Naive thymus-derived CD4-positive, alpha-beta T cell (primary cell): ENCODE measurements at regions of chr7 and their contacts with region 1.

Region 1: DNA sequence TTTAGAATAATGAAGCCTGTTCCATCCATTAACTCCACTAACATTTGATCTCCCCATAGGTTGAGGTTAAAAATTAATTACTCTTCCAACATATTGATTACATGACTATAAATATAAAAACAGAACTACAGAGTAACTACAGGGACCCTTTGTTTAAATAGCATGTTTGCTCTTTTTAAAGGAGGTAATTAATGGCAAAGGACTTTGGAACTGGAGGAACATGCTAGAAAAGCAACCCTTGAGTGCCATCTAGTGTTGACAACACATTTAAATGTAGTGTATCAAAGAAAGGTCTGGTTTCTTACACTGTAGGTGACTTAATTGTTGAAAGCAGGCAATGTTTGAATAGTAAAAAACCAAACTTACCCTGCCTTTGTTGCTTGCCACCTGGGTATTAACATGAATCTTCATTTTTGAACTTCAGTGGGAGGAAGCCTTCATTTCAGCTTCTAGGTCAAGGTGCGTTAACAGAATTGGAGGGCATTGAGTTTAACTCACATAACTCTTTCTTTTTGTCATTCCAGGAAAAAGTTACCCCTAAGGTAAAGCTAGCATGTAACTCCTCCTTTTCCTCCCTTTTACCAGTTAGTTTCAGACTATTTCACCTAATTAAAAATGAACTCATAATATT is 52.6 kb upstream of the CAPZA2 start:
- DNase-seq: peak in 6 of 9 donors; percentile 14 to 34 (median 23)
- ATAC-seq: peak; percentile 69
- H3K4me3 ChIP-seq: no peak overlapping the region
- H3K4me3 Mint-ChIP-seq: no peak overlapping the region
- H3K27ac ChIP-seq: no peak overlapping the region
- H3K27ac Mint-ChIP-seq: no peak overlapping the region
- H3K4me1 ChIP-seq: no peaks in the 10 kb centered on the region
- H3K4me1 Mint-ChIP-seq: no peaks in the 10 kb centered on the region
- H3K27me3 ChIP-seq: no peaks in the 10 kb centered on the region
- H3K27me3 Mint-ChIP-seq: peaks cover 0 to 22% (median 4%) of the 10 kb centered on the region in 5 donors

Region 2: DNA sequence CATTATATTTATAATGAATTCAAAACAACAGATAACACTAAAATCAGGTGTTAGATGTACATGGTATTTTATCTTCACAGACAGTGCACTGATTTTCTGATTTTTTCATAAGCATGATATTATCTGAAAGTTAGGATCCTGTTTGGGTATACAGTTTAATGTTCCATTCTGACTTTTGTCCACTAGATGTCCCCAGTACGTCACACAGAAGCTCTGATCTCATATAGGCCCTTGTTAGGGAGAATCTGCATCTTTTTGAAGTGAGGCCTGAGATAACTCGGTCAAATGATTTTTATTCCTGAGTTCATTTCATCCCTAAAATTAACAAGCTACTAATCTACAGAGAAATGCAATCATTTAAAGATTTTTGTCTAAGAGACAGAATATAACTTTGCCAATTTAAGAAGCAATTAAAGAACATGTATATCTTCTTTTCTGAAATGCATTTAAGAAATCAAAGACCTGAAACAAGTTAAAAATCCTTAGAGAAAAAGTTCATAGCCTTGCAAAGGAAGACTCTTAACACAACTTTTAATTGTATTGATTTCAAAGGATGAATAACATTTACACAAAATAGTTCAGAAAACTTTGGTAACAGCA is 671.4 kb before region 1 on chr7:
- CTCF ChIA-PET with region 1: no interaction called
- POLR2A ChIA-PET with region 1: no interaction called
- intact Hi-C with region 1: loop called in 1 of 2 experiments (anchors 1 kb)
- DNase-seq: peak in 5 of 9 donors; percentile 22 to 42 (median 27)
- ATAC-seq: peak; percentile 89
- H3K4me3 ChIP-seq: no peak overlapping the region
- H3K4me3 Mint-ChIP-seq: no peak overlapping the region
- H3K27ac ChIP-seq: no peak overlapping the region
- H3K27ac Mint-ChIP-seq: no peak overlapping the region
- H3K4me1 ChIP-seq: no peaks in the 10 kb centered on the region
- H3K4me1 Mint-ChIP-seq: peaks cover 0 to 18% (median 8%) of the 10 kb centered on the region in 7 donors
- H3K27me3 ChIP-seq: peaks cover 0 to 2% of the 10 kb centered on the region in 2 donors
- H3K27me3 Mint-ChIP-seq: peaks cover 0 to 22% (median 10%) of the 10 kb centered on the region in 5 donors

Region 3: DNA sequence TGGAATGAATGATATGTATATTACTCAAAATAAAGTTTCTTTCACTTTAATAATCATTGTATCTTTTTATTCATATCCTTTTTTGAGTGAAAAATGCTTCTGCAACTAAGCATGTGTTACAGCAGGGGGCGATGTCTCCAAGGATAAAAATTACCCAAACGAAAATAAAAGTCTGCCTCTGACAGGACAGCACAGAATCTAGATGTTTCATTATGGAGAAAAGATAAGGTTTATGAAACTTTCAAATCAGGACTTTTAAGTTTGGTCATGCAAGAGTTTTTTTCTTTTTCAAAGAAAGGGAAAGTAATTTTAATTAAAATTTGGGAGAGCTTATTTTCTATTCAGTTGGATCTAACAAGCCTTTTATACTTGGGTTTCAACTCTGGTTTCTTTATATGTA is 551.0 kb before region 1 on chr7:
- CTCF ChIA-PET with region 1: no interaction called
- POLR2A ChIA-PET with region 1: no interaction called
- intact Hi-C with region 1: loop called (anchors 1 to 2 kb)
- DNase-seq: peak in 7 of 9 donors; percentile 14 to 45 (median 36)
- ATAC-seq: peak; percentile 82
- H3K4me3 ChIP-seq: no peak overlapping the region
- H3K4me3 Mint-ChIP-seq: no peak overlapping the region
- H3K27ac ChIP-seq: no peak overlapping the region
- H3K27ac Mint-ChIP-seq: peak overlapping the region in 7 of 9 donors; percentile 33 to 79 (median 49)
- H3K4me1 ChIP-seq: no peaks in the 10 kb centered on the region
- H3K4me1 Mint-ChIP-seq: peaks cover 10 to 26% (median 15%) of the 10 kb centered on the region in 7 donors
- H3K27me3 ChIP-seq: no peaks in the 10 kb centered on the region
- H3K27me3 Mint-ChIP-seq: peaks cover 0 to 5% (median 0%) of the 10 kb centered on the region in 5 donors

Region 4: GRCh38 chr7:116679500-116679899 is 130.3 kb before region 1 on chr7:
- CTCF ChIA-PET with region 1: no interaction called
- POLR2A ChIA-PET with region 1: no interaction called
- intact Hi-C with region 1: loop called in 1 of 2 experiments (anchors 2 kb)
- DNase-seq: no peak
- ATAC-seq: no peak
- H3K4me3 ChIP-seq: no peak overlapping the region
- H3K4me3 Mint-ChIP-seq: no peak overlapping the region
- H3K27ac ChIP-seq: no peak overlapping the region
- H3K27ac Mint-ChIP-seq: no peak overlapping the region
- H3K4me1 ChIP-seq: no peaks in the 10 kb centered on the region
- H3K4me1 Mint-ChIP-seq: peaks cover 0 to 10% (median 0%) of the 10 kb centered on the region in 7 donors
- H3K27me3 ChIP-seq: no peaks in the 10 kb centered on the region
- H3K27me3 Mint-ChIP-seq: peaks cover 37 to 44% (median 42%) of the 10 kb centered on the region in 5 donors